ENCODE measurements at regions of chr6 and their contacts with region 1.

Region 1: DNA sequence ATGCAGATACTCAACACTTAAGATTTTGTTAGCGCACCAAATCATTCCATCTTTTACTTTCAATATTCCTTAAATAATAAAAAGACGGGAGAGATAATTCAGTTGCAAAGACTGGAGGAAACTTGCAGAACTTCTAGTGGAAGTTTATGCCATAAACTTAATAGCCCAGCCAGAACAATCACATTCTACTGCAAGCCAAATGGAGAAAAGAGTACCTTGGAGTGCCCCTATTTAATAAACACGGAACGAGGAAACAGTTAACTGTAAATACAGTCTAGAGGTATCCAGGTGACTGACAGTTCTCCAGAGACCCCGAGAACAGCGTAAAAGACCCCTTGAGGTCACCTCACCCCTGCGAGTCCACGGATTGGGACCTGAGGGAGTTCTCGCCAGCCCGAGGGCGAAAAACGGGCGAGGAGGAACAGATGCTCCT is 602 bp downstream of the SLC35B3 start:
- DNase-seq: no peak
- ATAC-seq: peak; percentile 23
- H3K4me3 ChIP-seq: peak overlapping the region; percentile 92
- H3K27ac ChIP-seq: peak overlapping the region; percentile 43
- H3K4me1 ChIP-seq: peaks cover 20% of the 10 kb centered on the region
- H3K27me3 ChIP-seq: no peaks in the 10 kb centered on the region
- CTCF ChIP-seq: no peak

Region 2: DNA sequence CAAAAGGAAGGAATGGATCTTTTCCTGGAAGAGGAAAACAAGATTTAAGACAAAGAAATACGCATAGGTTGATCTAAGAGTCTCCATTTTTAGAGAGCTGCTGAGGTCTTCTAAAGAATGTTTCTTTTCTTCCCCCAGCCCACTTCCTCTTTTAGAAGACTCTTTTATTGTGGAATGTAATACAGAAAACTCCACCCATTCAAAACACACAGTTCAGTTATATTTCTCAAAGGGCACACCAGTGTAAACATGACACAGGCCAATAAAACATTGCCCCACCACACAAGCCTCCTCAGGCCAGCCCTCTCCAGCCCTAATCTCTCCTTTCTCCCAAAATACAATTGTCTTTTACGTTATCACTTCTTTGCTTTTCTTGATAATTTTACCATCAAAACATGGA is 42.2 kb before region 1 on chr6:
- CTCF ChIA-PET with region 1: no interaction called
- POLR2A ChIA-PET with region 1: no interaction called
- intact Hi-C with region 1: loop called (anchors 5 kb)
- DNase-seq: peak; percentile 75
- ATAC-seq: peak; percentile 100
- H3K4me3 ChIP-seq: no peak overlapping the region
- H3K27ac ChIP-seq: no peak overlapping the region
- H3K4me1 ChIP-seq: peaks cover 11% of the 10 kb centered on the region
- H3K27me3 ChIP-seq: peaks cover 15% of the 10 kb centered on the region
- CTCF ChIP-seq: no peak